OCI-LY7 (cell line): ENCODE measurements at regions of chrX and their contacts with region 1.

Region 1: DNA sequence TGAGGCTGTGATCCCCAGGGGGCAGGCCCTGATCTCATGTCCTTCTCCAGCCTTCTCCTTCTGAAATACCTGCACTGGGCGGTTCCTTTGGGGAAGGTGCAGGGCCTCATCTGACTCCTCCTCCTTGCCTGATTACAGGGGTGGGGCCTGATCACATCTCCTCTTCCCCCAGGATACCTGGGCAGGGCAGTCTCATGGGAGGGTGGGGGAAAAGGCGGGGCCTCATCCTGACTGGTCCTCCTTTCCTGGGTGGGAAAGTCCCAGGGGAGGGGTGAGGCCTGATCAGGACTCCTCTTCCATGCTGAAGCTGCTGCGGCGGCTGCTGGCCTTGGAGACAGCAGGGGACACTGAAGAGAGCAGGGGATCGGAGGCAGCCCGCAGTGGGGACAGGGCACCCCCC is 13.3 kb downstream of the TFE3 start:
- DNase-seq: no peak
- H3K4me3 ChIP-seq: no peak overlapping the region
- H3K27ac ChIP-seq: no peak overlapping the region
- H3K4me1 ChIP-seq: no peaks in the 10 kb centered on the region
- CTCF ChIP-seq: no peak

Region 2: GRCh38 chrX:48196745-48197201 is 833.1 kb before region 1 on chrX and contains the start of gene SSX5:
- CTCF ChIA-PET with region 1: interaction called, 10 read pairs
- POLR2A ChIA-PET with region 1: no interaction called
- intact Hi-C with region 1: no loop called
- DNase-seq: no peak
- H3K4me3 ChIP-seq: no peak within 1 kb of the TSS
- H3K27ac ChIP-seq: no peak within 1 kb of the TSS
- H3K4me1 ChIP-seq: no peaks in the 10 kb centered on the region
- CTCF ChIP-seq: no peak
- total RNA-seq, gene SSX5: not detected in 2 replicates

Region 3: DNA sequence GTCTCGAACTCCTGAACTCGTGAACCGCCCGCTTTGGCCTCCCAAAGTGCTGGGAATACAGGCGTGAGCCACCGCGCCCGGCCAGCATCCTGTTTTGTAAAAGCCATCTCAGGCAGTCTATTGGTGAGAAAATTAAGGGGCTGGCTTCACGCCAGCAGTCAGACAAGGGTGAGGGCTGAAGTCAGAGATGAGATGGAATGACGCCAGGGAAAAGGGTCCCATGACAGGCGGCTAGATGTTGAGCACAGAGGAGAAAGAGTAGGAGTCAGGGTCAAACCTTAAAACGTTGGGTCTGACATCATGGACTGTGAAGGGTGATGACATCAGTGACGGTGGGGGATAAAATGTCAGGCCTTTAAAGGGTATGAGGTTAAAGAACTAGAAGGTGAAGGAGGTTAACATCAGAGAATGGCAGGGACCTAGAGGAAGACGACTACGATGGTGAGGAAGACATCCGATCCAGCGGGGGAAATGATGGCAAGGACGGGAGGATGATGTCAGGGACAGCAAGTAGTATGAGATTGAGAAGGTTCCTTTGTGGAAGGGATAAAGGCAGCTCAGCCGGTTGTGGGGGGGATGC is 456.1 kb before region 1 on chrX:
- CTCF ChIA-PET with region 1: no interaction called
- POLR2A ChIA-PET with region 1: no interaction called
- intact Hi-C with region 1: no loop called
- DNase-seq: no peak
- H3K4me3 ChIP-seq: peak overlapping the region; percentile 100
- H3K27ac ChIP-seq: peak overlapping the region; percentile 86
- H3K4me1 ChIP-seq: peaks cover 36% of the 10 kb centered on the region
- CTCF ChIP-seq: no peak

Region 4: GRCh38 chrX:48976086-48976485 is 53.8 kb before region 1 on chrX:
- CTCF ChIA-PET with region 1: no interaction called
- POLR2A ChIA-PET with region 1: no interaction called
- intact Hi-C with region 1: no loop called
- DNase-seq: no peak
- H3K4me3 ChIP-seq: no peak overlapping the region
- H3K27ac ChIP-seq: no peak overlapping the region
- H3K4me1 ChIP-seq: no peaks in the 10 kb centered on the region
- CTCF ChIP-seq: no peak

Region 5: GRCh38 chrX:49100704-49101628 is 71.1 kb after region 1 on chrX:
- CTCF ChIA-PET with region 1: no interaction called
- POLR2A ChIA-PET with region 1: interaction called, 10 read pairs
- intact Hi-C with region 1: no loop called
- DNase-seq: peak; percentile 93
- H3K4me3 ChIP-seq: peak overlapping the region; percentile 85
- H3K27ac ChIP-seq: peak overlapping the region; percentile 85
- H3K4me1 ChIP-seq: peaks cover 15% of the 10 kb centered on the region
- CTCF ChIP-seq: no peak

Region 6: DNA sequence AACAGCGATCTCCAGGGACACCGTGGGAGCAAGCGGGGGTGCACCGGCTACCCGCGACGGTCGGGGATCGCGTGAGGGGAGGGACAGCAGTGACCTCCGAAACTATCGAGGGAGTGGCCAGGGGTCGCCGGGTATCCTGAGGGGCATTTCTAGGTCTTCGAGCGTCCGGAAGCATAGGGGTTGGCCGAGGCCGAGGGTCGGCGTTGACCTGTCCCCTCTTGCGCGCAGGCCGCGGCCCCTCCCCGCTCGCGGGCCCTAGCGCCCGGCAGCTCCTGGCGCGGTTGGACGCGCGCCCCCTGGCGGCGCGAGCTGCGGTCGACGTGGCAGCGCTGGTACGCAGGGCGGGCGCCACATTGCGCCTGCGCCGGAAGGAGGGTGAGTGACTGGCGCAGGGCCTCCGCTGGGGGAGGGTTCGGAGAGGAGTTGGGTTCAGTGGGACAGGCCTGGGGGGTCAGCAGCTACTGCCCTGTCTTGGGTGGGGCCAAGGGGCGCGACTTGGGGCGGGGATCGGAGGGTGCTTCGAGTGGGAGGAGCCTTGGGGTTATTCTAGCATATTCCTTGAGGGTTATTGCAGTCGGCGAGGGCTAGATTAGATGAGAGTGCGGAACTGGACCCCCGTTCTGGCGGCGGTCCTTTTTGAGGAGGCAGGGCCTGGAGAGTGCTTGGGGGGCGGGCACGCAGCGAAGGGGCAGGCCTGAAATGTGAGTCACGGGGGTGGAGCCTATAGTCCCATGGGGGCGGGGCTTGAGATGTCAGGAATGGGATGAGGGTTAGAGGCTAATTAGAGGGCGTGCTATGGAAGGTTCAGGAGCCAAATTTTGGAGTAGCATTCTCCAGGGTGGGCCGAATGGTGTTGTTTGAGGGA is 133.9 kb after region 1 on chrX:
- CTCF ChIA-PET with region 1: no interaction called
- POLR2A ChIA-PET with region 1: no interaction called
- intact Hi-C with region 1: no loop called
- DNase-seq: peak; percentile 85
- H3K4me3 ChIP-seq: peak overlapping the region; percentile 63
- H3K27ac ChIP-seq: peak overlapping the region; percentile 66
- H3K4me1 ChIP-seq: peaks cover 37% of the 10 kb centered on the region
- CTCF ChIP-seq: peak; percentile 72

Region 7: DNA sequence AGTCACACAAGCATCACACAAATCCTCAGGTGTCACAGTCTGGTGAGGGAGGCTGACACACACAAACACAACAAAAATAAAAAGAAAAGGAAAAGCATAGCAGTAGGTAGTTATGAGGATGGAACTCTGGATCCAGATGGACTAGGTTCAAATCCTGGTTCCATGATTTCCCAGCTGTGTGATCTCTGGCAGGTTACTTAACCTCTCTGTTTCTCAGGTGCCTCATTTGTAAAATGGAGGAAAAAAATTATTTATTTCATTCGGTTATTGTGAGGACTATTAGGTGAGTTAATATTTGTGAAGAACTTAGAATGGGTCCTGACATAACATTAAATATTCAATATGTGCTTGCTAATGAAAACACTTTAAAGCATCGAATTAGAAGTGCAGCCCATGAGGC is 588.7 kb after region 1 on chrX:
- CTCF ChIA-PET with region 1: no interaction called
- POLR2A ChIA-PET with region 1: no interaction called
- intact Hi-C with region 1: no loop called
- DNase-seq: no peak
- H3K4me3 ChIP-seq: no peak overlapping the region
- H3K27ac ChIP-seq: no peak overlapping the region
- H3K4me1 ChIP-seq: no peaks in the 10 kb centered on the region
- CTCF ChIP-seq: no peak